H1 (cell line): ENCODE measurements at regions of chr4 and their contacts with region 1.

Region 1: GRCh38 chr4:68175562-68176155 is 46.0 kb upstream of the TMPRSS11F start:
- DNase-seq: no peak
- H3K4me3 ChIP-seq: no peak overlapping the region
- H3K27ac ChIP-seq: no peak overlapping the region
- H3K4me1 ChIP-seq: no peaks in the 10 kb centered on the region
- H3K27me3 ChIP-seq: no peaks in the 10 kb centered on the region
- CTCF ChIP-seq: peak in 2 of 3 experiments; percentile 60 to 67; a peak in 2 of 4 replicates
- EP300 ChIP-seq: no peak
- POLR2A ChIP-seq: no peak
- RAD21 ChIP-seq: peak; percentile 94

Region 2: GRCh38 chr4:67909905-67910584 is 265.6 kb before region 1 on chr4:
- CTCF ChIA-PET with region 1: interaction called, 14 read pairs
- POLR2A ChIA-PET with region 1: no interaction called
- DNase-seq: no peak
- H3K4me3 ChIP-seq: no peak overlapping the region
- H3K27ac ChIP-seq: no peak overlapping the region
- H3K4me1 ChIP-seq: no peaks in the 10 kb centered on the region
- H3K27me3 ChIP-seq: no peaks in the 10 kb centered on the region
- CTCF ChIP-seq: peak in 2 of 3 experiments; percentile 21 to 28; a peak in 2 of 4 replicates
- EP300 ChIP-seq: no peak
- POLR2A ChIP-seq: no peak
- RAD21 ChIP-seq: peak; percentile 17 to 37; a peak in 3 of 4 replicates

Region 3: DNA sequence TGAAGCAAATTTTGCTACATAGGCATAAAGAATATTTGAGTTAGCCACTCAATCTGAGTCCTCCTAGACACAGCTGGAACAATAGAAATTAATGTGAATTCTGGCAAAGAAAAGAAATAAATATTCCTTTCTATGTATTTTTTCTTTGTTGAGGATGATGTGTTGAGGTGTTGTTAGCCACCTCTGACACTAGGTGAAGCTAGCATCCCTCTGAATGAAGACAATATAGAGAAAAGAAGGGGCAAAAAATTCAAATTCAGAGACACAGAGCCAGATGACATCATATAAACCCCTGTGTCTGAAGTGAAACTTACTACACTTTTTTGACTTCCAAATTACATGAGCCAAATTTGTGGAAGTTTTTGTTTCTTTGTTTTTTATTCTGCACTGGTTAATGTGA is 257.2 kb before region 1 on chr4:
- CTCF ChIA-PET with region 1: interaction called, 11 read pairs
- POLR2A ChIA-PET with region 1: no interaction called
- DNase-seq: no peak
- H3K4me3 ChIP-seq: no peak overlapping the region
- H3K27ac ChIP-seq: no peak overlapping the region
- H3K4me1 ChIP-seq: no peaks in the 10 kb centered on the region
- H3K27me3 ChIP-seq: no peaks in the 10 kb centered on the region
- CTCF ChIP-seq: peak in 2 of 3 experiments; percentile 56 to 68; a peak in 2 of 4 replicates
- EP300 ChIP-seq: no peak
- POLR2A ChIP-seq: no peak
- RAD21 ChIP-seq: peak; percentile 86 to 90

Region 4: DNA sequence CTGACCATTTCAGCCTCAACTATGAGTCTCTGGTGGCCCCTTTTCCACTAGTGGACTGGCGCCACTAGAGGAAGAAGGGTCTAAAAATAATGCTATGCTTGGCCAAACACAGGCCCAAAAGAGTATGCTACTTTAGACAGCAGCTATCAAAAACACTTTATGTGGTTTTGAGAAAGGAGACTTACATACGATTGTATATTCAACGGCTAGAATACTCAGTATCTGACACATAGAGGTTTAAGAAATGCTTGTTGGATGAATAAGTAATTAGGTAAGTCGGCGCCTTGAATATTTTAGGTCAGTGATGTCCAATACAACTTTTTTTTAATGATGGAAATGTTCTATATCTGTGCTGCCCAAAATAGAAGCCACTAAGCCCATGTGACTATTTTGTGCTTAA is 186.7 kb before region 1 on chr4:
- CTCF ChIA-PET with region 1: interaction called, 41 read pairs
- POLR2A ChIA-PET with region 1: no interaction called
- DNase-seq: no peak
- H3K4me3 ChIP-seq: no peak overlapping the region
- H3K27ac ChIP-seq: no peak overlapping the region
- H3K4me1 ChIP-seq: no peaks in the 10 kb centered on the region
- H3K27me3 ChIP-seq: no peaks in the 10 kb centered on the region
- CTCF ChIP-seq: no peak
- EP300 ChIP-seq: no peak
- POLR2A ChIP-seq: no peak
- RAD21 ChIP-seq: no peak

Region 5: DNA sequence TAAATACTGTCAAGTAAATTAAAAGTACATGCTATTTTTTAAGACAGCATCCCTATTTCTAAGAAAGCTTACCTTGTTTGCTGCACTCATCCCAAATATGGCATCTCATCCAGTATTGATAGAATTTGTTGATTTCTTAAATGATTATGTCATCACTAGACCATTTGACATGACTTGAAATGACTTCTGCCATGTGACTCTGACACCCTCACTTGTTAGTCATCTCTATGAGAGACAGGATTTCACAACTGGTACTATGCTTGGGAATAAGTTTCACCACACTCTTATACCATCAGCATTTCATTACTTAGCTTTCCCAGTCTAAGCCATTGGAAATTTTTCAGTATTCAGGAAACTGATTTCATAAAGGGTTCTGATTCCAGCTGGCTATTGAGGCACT is 101.3 kb before region 1 on chr4:
- CTCF ChIA-PET with region 1: interaction called, 43 read pairs
- POLR2A ChIA-PET with region 1: no interaction called
- DNase-seq: no peak
- H3K4me3 ChIP-seq: no peak overlapping the region
- H3K27ac ChIP-seq: no peak overlapping the region
- H3K4me1 ChIP-seq: peaks cover 0 to 4% (median 0%) of the 10 kb centered on the region in 4 experiments; a peak in 2 of 7 replicates
- H3K27me3 ChIP-seq: peaks cover 0 to 2% (median 0%) of the 10 kb centered on the region in 4 experiments; a peak in 1 of 7 replicates
- CTCF ChIP-seq: no peak
- EP300 ChIP-seq: no peak
- POLR2A ChIP-seq: no peak
- RAD21 ChIP-seq: no peak

Region 6: DNA sequence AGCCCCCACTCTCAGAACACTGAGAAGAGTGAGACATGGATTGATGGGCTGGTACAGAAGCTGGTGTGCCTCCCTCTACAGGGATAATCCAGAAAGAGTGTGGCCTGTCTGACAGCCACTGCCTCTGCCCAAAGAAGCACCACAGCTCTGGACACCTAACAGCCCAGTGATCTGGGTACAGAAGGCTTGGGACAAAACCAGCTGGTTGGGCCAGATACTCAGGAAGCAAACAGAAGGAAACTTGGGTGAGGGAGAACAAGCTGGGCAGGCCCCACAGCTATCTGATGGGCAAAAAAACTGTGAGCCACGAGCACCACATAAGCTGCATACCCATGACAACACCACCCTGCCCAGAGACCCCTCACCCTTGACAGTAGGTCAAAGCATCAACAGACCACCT is 92.9 kb before region 1 on chr4:
- CTCF ChIA-PET with region 1: interaction called, 43 read pairs
- POLR2A ChIA-PET with region 1: no interaction called
- DNase-seq: no peak
- H3K4me3 ChIP-seq: no peak overlapping the region
- H3K27ac ChIP-seq: no peak overlapping the region
- H3K4me1 ChIP-seq: peaks cover 0 to 3% (median 0%) of the 10 kb centered on the region in 4 experiments; a peak in 1 of 7 replicates
- H3K27me3 ChIP-seq: no peaks in the 10 kb centered on the region
- CTCF ChIP-seq: no peak
- EP300 ChIP-seq: no peak
- POLR2A ChIP-seq: no peak
- RAD21 ChIP-seq: no peak

Region 7: GRCh38 chr4:68498413-68499007 is 322.9 kb after region 1 on chr4:
- CTCF ChIA-PET with region 1: no interaction called
- POLR2A ChIA-PET with region 1: no interaction called
- DNase-seq: peak; percentile 10 to 65
- H3K4me3 ChIP-seq: no peak overlapping the region
- H3K27ac ChIP-seq: no peak overlapping the region
- H3K4me1 ChIP-seq: peaks cover 0 to 4% (median 0%) of the 10 kb centered on the region in 4 experiments; a peak in 1 of 7 replicates
- H3K27me3 ChIP-seq: peaks cover 0 to 1% (median 0%) of the 10 kb centered on the region in 4 experiments; a peak in 1 of 7 replicates
- CTCF ChIP-seq: peak in 2 of 3 experiments; percentile 76 to 78; a peak in 3 of 4 replicates
- EP300 ChIP-seq: no peak
- POLR2A ChIP-seq: no peak
- RAD21 ChIP-seq: peak; percentile 97 to 99